Lower leg skin (tissue), 4 donors: ENCODE measurements at regions of chr12 and their contacts with region 1.

Region 1: GRCh38 chr12:30754709-30755394 is at the start of gene CAPRIN2:
- DNase-seq: peak; percentile 92 to 99
- H3K4me3 ChIP-seq: peak within 1 kb of the TSS; percentile 85
- CTCF ChIP-seq: no peak
- POLR2A ChIP-seq: no peak
- total RNA-seq, gene CAPRIN2: 12.1 to 29.0 (median 16.2) TPM

Region 2: GRCh38 chr12:30473274-30473673 is 281.6 kb before region 1 on chr12:
- intact Hi-C with region 1: no loop called
- DNase-seq: no peak
- H3K4me3 ChIP-seq: no peak overlapping the region
- CTCF ChIP-seq: no peak
- POLR2A ChIP-seq: no peak

Region 3: DNA sequence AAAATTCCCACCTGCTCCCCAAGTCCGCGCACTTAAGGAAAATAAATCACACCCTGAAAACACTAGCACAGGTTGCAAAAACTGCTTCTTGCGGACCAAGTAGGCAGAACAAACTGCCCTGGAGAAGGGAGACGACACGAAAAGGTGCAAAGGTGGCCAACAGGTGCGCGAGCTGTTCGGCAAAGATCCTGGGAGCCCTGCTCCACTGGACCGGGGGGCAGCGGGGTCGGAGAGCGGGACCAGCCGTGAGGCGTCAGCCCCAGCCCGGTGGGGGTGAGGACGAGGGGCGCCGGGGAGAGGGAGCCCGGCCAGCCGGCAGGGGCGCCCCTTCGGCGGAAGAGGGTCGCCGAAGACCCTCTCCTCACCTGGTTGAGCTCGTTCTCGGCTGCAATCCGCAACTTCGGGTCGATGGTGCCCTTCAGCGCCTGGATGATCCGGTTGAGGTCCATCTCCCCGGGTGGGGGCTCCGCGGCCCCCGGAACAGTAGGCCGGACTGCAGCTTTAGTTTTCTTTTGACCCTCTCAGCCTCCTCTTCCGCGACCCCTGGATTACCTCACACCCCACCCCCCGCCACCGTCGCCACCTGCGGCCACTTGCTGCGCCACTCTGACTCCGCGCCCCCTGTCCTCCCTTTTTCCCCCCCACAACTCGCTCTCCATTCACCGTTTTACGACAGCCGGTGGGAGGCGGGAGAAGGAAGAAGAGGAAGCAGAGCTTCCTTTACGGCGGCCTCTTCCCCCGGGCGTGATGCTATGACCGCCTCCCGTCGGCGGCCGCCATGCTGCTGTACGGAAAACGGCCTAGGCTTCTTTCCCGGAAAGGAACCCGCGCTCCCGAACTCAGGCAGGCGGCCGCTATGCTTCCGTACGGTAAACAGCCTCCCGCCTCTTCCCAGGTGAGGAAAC is 59.4 kb before region 1 on chr12 and contains the start of gene IPO8:
- intact Hi-C with region 1: loop called (anchors 10 kb)
- DNase-seq: peak; percentile 91 to 97
- H3K4me3 ChIP-seq: peak within 1 kb of the TSS; percentile 92
- CTCF ChIP-seq: no peak
- POLR2A ChIP-seq: no peak
- total RNA-seq, gene IPO8: 17.0 to 29.2 (median 21.3) TPM